IMR-90 (cell line): ENCODE measurements at regions of chrX and their contacts with region 1.

Region 1: GRCh38 chrX:57156397-57157049 is 19.3 kb upstream of the SPIN2A start:
- DNase-seq: peak; percentile 40
- ATAC-seq: peak; percentile 85
- H3K4me3 ChIP-seq: no peak overlapping the region
- H3K27ac ChIP-seq: no peak overlapping the region
- H3K4me1 ChIP-seq: no peaks in the 10 kb centered on the region
- H3K27me3 ChIP-seq: no peaks in the 10 kb centered on the region
- CTCF ChIP-seq: peak; percentile 43
- POLR2A ChIP-seq: no peak
- RAD21 ChIP-seq: peak; percentile 40; the same call in 1 of the 2 replicates

Region 2: DNA sequence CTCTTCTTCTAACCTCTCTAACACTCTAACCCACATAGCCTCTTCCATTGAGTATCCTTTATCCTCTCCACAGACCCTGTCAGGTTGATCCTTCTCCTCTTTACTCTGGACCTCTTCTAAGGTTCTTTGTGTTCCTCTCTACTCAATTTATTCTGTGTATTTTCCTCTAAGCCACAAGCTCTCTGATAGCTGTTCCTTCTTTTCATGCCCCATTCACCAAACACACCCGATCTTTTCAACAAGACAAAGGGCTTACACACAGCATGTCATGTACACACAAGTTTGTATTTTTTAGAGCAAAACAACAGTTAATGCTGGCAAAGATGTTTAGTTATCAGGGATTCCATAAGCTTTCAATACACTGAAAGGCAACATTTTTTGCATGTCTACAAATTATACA is 37.1 kb before region 1 on chrX:
- CTCF ChIA-PET with region 1: no interaction called
- POLR2A ChIA-PET with region 1: no interaction called
- dilution Hi-C with region 1: no loop called
- in situ Hi-C with region 1: no loop called
- intact Hi-C with region 1: no loop called
- DNase-seq: no peak
- ATAC-seq: no peak
- H3K4me3 ChIP-seq: no peak overlapping the region
- H3K27ac ChIP-seq: no peak overlapping the region
- H3K4me1 ChIP-seq: no peaks in the 10 kb centered on the region
- H3K27me3 ChIP-seq: no peaks in the 10 kb centered on the region
- CTCF ChIP-seq: no peak
- POLR2A ChIP-seq: no peak
- RAD21 ChIP-seq: no peak

Region 3: GRCh38 chrX:57453901-57454300 is 297.4 kb after region 1 on chrX:
- CTCF ChIA-PET with region 1: no interaction called
- POLR2A ChIA-PET with region 1: no interaction called
- dilution Hi-C with region 1: no loop called
- in situ Hi-C with region 1: no loop called
- intact Hi-C with region 1: loop called (anchors 5 kb)
- DNase-seq: peak; percentile 4
- ATAC-seq: no peak
- H3K4me3 ChIP-seq: no peak overlapping the region
- H3K27ac ChIP-seq: no peak overlapping the region
- H3K4me1 ChIP-seq: no peaks in the 10 kb centered on the region
- H3K27me3 ChIP-seq: no peaks in the 10 kb centered on the region
- CTCF ChIP-seq: peak; percentile 37
- POLR2A ChIP-seq: no peak
- RAD21 ChIP-seq: no peak